ENCODE measurements at regions of chr3 and their contacts with region 1.

Region 1: GRCh38 chr3:184185461-184186308 is at the start of gene ABCF3:
- DNase-seq: peak; percentile 99
- H3K4me3 Mint-ChIP-seq: peak within 1 kb of the TSS; percentile 96
- H3K27ac Mint-ChIP-seq: peak within 1 kb of the TSS; percentile 92
- H3K4me1 Mint-ChIP-seq: peaks cover 29% of the 10 kb centered on the region
- H3K27me3 Mint-ChIP-seq: no peaks in the 10 kb centered on the region
- total RNA-seq, gene ABCF3: 41.2 to 48.7 TPM

Region 2: DNA sequence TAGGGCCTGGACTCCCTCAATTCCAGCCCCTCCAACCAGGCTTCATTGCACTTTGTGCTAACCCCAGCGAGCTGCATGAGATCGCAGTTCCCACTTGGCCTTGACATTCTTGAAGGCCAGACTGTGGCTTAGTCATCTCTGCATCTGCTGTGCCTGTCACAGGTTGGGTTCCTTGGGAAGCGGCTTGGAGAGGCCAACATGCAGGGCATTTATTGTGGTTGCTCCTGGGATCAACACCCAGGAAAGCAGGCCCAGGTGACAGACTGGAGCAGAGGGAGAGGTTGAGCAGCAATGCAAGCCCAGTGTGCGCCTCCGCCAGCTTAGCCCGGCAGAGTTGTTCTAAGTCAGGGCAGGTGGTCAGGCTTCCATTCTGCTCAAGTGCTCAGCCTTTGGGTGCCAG is 10.9 kb after region 1 on chr3:
- CTCF ChIA-PET with region 1: no interaction called
- POLR2A ChIA-PET with region 1: no interaction called
- intact Hi-C with region 1: no loop called
- DNase-seq: no peak
- H3K4me3 Mint-ChIP-seq: no peak overlapping the region
- H3K27ac Mint-ChIP-seq: no peak overlapping the region
- H3K4me1 Mint-ChIP-seq: no peaks in the 10 kb centered on the region
- H3K27me3 Mint-ChIP-seq: no peaks in the 10 kb centered on the region

Region 3: DNA sequence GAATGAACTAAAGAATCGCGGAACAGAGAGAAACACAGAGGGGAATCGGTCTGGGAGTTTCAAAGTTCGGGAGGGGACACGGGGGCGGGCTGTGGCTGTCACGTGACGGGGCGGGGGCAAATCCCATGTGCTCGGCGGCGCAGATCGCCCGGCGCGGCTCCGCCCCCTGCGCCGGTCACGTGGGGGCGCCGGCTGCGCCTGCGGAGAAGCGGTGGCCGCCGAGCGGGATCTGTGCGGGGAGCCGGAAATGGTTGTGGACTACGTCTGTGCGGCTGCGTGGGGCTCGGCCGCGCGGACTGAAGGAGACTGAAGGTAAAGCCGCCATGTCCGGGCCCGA is 128.6 kb after region 1 on chr3 and contains the start of gene EIF4G1:
- CTCF ChIA-PET with region 1: no interaction called
- POLR2A ChIA-PET with region 1: no interaction called
- intact Hi-C with region 1: loop called (anchors 1 kb)
- DNase-seq: peak; percentile 95
- H3K4me3 Mint-ChIP-seq: peak within 1 kb of the TSS; percentile 86
- H3K27ac Mint-ChIP-seq: peak within 1 kb of the TSS; percentile 93
- H3K4me1 Mint-ChIP-seq: peaks cover 29% of the 10 kb centered on the region
- H3K27me3 Mint-ChIP-seq: no peaks in the 10 kb centered on the region
- total RNA-seq, gene EIF4G1: 410 to 432 TPM

Measured in activated CD4-positive, alpha-beta memory T cell treated with anti-CD3 and anti-CD28 coated beads for 36 hours (primary cell).